Mucosa of descending colon (tissue), 3 donors: ENCODE measurements at regions of chr2 and their contacts with region 1.

Region 1: GRCh38 chr2:203814661-203815540 is 52.7 kb upstream of the CTLA4 start:
- DNase-seq: peak; percentile 68 to 74 (median 70)
- ATAC-seq: peak; percentile 71
- H3K4me3 ChIP-seq: peak overlapping the region; percentile 7
- H3K4me1 ChIP-seq: peaks cover 40% of the 10 kb centered on the region
- CTCF ChIP-seq: peak; percentile 48

Region 2: DNA sequence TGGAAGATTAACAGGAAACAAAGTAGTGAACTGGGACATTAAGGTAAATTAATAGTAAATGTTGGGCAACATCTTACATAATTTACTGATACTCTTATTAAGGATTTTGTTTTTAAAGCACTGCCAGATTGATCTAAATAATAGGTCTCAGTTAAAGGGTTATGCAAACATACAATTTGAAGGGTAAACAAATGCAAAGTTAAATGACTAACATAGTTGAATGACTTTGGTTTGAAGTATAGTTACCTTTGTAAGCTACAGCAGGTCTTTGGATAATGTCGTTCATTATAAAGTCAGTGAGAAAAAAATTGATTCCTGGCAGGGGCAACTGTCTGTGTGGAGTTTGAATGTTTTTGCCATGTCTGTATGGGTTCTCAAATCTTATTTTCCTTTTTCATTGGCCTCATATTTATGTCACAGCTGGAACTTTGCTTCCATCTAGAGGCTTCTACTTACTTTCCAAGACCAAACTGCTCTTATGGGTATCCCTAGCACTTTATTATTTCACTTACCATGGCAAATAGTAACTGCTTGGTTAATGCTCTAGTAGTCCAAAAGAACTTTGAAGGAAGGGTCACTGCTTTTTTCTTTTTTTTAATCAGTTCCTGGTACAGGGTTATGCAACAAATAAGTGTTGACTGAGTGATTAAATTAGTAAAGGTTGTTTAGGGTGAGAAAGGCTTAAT is 692.5 kb before region 1 on chr2:
- intact Hi-C with region 1: no loop called
- DNase-seq: no peak
- ATAC-seq: peak; percentile 60
- H3K4me3 ChIP-seq: no peak overlapping the region
- H3K4me1 ChIP-seq: peaks cover 17% of the 10 kb centered on the region
- CTCF ChIP-seq: no peak

Region 3: GRCh38 chr2:203238704-203239526 is 576.0 kb before region 1 on chr2 and contains the start of gene CYP20A1:
- intact Hi-C with region 1: loop called in 1 of 2 experiments (anchors 10 kb)
- DNase-seq: peak; percentile 98 to 99 (median 98)
- ATAC-seq: peak; percentile 97
- H3K4me3 ChIP-seq: peak within 1 kb of the TSS; percentile 75
- H3K4me1 ChIP-seq: peaks cover 9% of the 10 kb centered on the region
- CTCF ChIP-seq: peak; percentile 10
- total RNA-seq, gene CYP20A1: 24.6 to 33.1 (median 25.8) TPM

Region 4: GRCh38 chr2:203484266-203485112 is 330.4 kb before region 1 on chr2:
- intact Hi-C with region 1: loop called in 1 of 2 experiments (anchors 10 kb)
- DNase-seq: peak in 1 of 3 donors; percentile 47
- ATAC-seq: peak; percentile 80
- H3K4me3 ChIP-seq: no peak overlapping the region
- H3K4me1 ChIP-seq: no peaks in the 10 kb centered on the region
- CTCF ChIP-seq: no peak

Region 5: GRCh38 chr2:203650860-203651613 is 163.9 kb before region 1 on chr2:
- intact Hi-C with region 1: loop called in 1 of 2 experiments (anchors 5 kb)
- DNase-seq: peak in 2 of 3 donors; percentile 42 to 91
- ATAC-seq: peak; percentile 88
- H3K4me3 ChIP-seq: no peak overlapping the region
- H3K4me1 ChIP-seq: peaks cover 31% of the 10 kb centered on the region
- CTCF ChIP-seq: peak; percentile 10